Motor neuron (in vitro differentiated cells): ENCODE measurements at regions of chr13 and their contacts with region 1.

Region 1: GRCh38 chr13:36858290-36858689 is 39.3 kb downstream of the RFXAP start:
- ATAC-seq: peak in 6 of 8 experiments; percentile 44 to 90 (median 60)
- H3K4me3 ChIP-seq: no peak overlapping the region
- H3K27ac ChIP-seq: no peak overlapping the region
- H3K4me1 ChIP-seq: no peaks in the 10 kb centered on the region

Region 2: GRCh38 chr13:36599711-36600110 is 258.6 kb before region 1 on chr13:
- in situ Hi-C with region 1: no loop called
- ATAC-seq: peak in 1 of 8 experiments; percentile 7
- H3K4me3 ChIP-seq: no peak overlapping the region
- H3K27ac ChIP-seq: no peak overlapping the region
- H3K4me1 ChIP-seq: no peaks in the 10 kb centered on the region

Region 3: DNA sequence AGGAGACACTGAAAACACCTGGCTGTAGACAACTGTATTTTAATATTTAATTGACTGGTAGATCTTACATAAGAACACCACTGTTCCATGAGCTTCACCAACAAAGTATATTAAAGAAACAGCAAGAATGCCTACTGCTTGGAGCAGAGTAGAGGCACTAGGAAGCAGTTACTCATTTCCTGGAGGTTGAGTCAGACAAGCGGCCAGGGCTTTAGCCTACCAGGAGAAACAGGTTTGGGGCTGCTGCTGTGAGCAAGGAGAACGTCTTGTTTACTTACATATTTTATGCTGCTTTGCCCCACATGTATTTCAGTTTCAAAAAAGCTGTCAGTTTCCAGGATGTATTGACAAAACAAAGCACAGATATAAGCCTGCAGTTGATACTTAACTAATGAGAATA is 107.5 kb after region 1 on chr13:
- in situ Hi-C with region 1: loop called in 1 of 9 experiments (anchors 25 kb)
- ATAC-seq: peak in 2 of 8 experiments; percentile 76 to 77
- H3K4me3 ChIP-seq: no peak overlapping the region
- H3K27ac ChIP-seq: no peak overlapping the region
- H3K4me1 ChIP-seq: no peaks in the 10 kb centered on the region